ENCODE measurements at regions of chr3 and their contacts with region 1.

Region 1: DNA sequence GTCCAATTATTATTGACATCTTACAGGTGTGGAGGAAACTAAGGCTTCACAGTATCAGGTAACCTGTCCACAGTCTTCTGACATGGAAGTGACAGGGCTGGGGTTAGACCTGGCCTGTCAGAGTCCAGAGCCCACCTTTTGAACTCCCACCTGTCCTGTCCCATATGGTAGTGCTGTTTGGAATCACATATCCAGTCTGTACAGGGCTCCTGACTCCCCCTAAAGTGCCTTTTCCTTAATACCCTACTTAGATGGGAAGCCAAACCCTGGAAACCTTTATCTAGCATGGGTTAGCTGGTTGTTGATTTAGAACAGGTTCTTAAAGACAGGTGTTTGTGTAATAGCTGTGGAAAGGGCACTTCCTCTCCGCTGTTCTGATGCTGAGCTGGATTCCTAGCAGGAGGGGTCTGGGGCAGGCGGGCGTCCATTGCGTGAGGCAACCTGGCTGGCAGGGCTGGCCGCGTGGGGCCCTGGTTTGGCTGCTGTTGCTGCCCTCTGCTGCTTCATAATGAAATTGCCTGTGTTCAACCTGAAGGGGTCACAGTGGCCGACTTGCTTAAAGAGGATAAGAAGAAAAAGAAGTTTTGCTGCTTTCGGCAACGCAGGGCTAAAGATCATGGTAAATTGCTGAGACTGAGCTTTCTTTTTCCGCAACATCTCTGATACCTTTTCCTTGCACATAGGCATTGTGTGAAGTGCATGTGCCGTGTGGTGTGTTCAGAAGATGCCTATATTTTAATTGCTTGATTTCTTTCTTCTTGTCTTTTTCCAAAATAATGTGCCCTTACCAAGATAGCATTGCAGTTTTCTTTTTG is 136.2 kb downstream of the CHDH start:
- DNase-seq: peak; percentile 75 to 86 (median 85)
- H3K4me3 ChIP-seq: no peak overlapping the region
- H3K27ac ChIP-seq: no peak overlapping the region
- H3K4me1 ChIP-seq: peaks cover 4 to 22% (median 16%) of the 10 kb centered on the region in 4 experiments
- H3K27me3 ChIP-seq: peaks cover 0 to 11% (median 0%) of the 10 kb centered on the region in 5 experiments

Region 2: GRCh38 chr3:53375019-53375418 is 335.0 kb before region 1 on chr3:
- CTCF ChIA-PET with region 1: interaction called, 31 read pairs
- POLR2A ChIA-PET with region 1: no interaction called
- DNase-seq: peak; percentile 65 to 77 (median 68)
- H3K4me3 ChIP-seq: no peak overlapping the region
- H3K27ac ChIP-seq: no peak overlapping the region
- H3K4me1 ChIP-seq: no peaks in the 10 kb centered on the region
- H3K27me3 ChIP-seq: no peaks in the 10 kb centered on the region

Region 3: GRCh38 chr3:53668872-53669271 is 41.2 kb before region 1 on chr3:
- CTCF ChIA-PET with region 1: interaction called, 16 read pairs
- POLR2A ChIA-PET with region 1: no interaction called
- DNase-seq: peak in 1 of 3 donors; percentile 12
- H3K4me3 ChIP-seq: no peak overlapping the region
- H3K27ac ChIP-seq: no peak overlapping the region
- H3K4me1 ChIP-seq: peaks cover 0 to 7% (median 0%) of the 10 kb centered on the region in 4 experiments
- H3K27me3 ChIP-seq: peaks cover 0 to 3% (median 0%) of the 10 kb centered on the region in 5 experiments

Region 4: DNA sequence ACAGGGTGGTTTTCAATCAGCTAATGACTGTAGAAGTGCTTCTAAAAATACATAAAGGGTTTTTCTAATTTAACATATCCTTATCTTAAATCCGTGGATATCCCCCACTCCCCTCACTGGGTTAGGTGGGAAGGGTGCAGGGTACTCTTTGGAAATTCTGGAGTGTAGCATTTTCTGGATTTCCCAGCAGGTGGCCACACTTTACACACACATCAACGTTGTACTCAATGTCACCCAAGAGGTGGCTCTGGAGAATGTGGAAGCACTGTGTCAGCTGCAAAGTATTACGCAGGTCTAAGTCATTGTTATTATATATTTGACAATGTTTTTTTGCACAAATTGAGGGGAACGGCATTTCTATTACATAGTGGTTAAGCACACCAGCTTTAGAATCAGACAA is 32.7 kb before region 1 on chr3:
- CTCF ChIA-PET with region 1: interaction called, 16 read pairs
- POLR2A ChIA-PET with region 1: no interaction called
- DNase-seq: peak; percentile 29 to 71 (median 65)
- H3K4me3 ChIP-seq: no peak overlapping the region
- H3K27ac ChIP-seq: no peak overlapping the region
- H3K4me1 ChIP-seq: peaks cover 0 to 3% (median 0%) of the 10 kb centered on the region in 4 experiments
- H3K27me3 ChIP-seq: peaks cover 0 to 21% (median 6%) of the 10 kb centered on the region in 5 experiments

Region 5: GRCh38 chr3:53696401-53697150 is 13.5 kb before region 1 on chr3:
- CTCF ChIA-PET with region 1: interaction called, 25 read pairs
- POLR2A ChIA-PET with region 1: no interaction called
- DNase-seq: no peak
- H3K4me3 ChIP-seq: no peak overlapping the region
- H3K27ac ChIP-seq: no peak overlapping the region
- H3K4me1 ChIP-seq: peaks cover 7 to 40% (median 23%) of the 10 kb centered on the region in 4 experiments
- H3K27me3 ChIP-seq: peaks cover 0 to 36% (median 19%) of the 10 kb centered on the region in 5 experiments

Region 6: GRCh38 chr3:53730576-53730975 is 20.5 kb after region 1 on chr3:
- CTCF ChIA-PET with region 1: no interaction called
- POLR2A ChIA-PET with region 1: no interaction called
- DNase-seq: no peak
- H3K4me3 ChIP-seq: no peak overlapping the region
- H3K27ac ChIP-seq: no peak overlapping the region
- H3K4me1 ChIP-seq: no peaks in the 10 kb centered on the region
- H3K27me3 ChIP-seq: no peaks in the 10 kb centered on the region